Activated CD8-positive, alpha-beta memory T cell treated with anti-CD3 and anti-CD28 coated beads, Interleukin-2, amount 10 ng/mL, durations not matched to agents 7 days and 5 days (primary cell): ENCODE measurements at regions of chr14 and their contacts with region 1.

Region 1: GRCh38 chr14:106308839-106309389 is 782.5 kb downstream of the TMEM121 start:
- DNase-seq: peak; percentile 94
- ATAC-seq: peak; percentile 95
- H3K4me3 Mint-ChIP-seq: no peak overlapping the region
- H3K27ac Mint-ChIP-seq: no peak overlapping the region
- H3K4me1 Mint-ChIP-seq: no peaks in the 10 kb centered on the region
- H3K27me3 Mint-ChIP-seq: peaks cover 61% of the 10 kb centered on the region

Region 2: GRCh38 chr14:106235356-106236159 is 73.4 kb before region 1 on chr14:
- CTCF ChIA-PET with region 1: no interaction called
- DNase-seq: no peak
- ATAC-seq: no peak
- H3K4me3 Mint-ChIP-seq: no peak overlapping the region
- H3K27ac Mint-ChIP-seq: no peak overlapping the region
- H3K4me1 Mint-ChIP-seq: peaks cover 7% of the 10 kb centered on the region
- H3K27me3 Mint-ChIP-seq: peaks cover 44% of the 10 kb centered on the region

Region 3: GRCh38 chr14:106286697-106287290 is 22.1 kb before region 1 on chr14:
- CTCF ChIA-PET with region 1: interaction called, 19 read pairs
- DNase-seq: no peak
- ATAC-seq: no peak
- H3K4me3 Mint-ChIP-seq: no peak overlapping the region
- H3K27ac Mint-ChIP-seq: no peak overlapping the region
- H3K4me1 Mint-ChIP-seq: no peaks in the 10 kb centered on the region
- H3K27me3 Mint-ChIP-seq: peaks cover 38% of the 10 kb centered on the region

Region 4: GRCh38 chr14:106294324-106294723 is 14.6 kb before region 1 on chr14:
- CTCF ChIA-PET with region 1: interaction called, 19 read pairs
- DNase-seq: no peak
- ATAC-seq: no peak
- H3K4me3 Mint-ChIP-seq: no peak overlapping the region
- H3K27ac Mint-ChIP-seq: no peak overlapping the region
- H3K4me1 Mint-ChIP-seq: no peaks in the 10 kb centered on the region
- H3K27me3 Mint-ChIP-seq: peaks cover 72% of the 10 kb centered on the region